Vagina (tissue), 2 donors: ENCODE measurements at regions of chr4 and their contacts with region 1.

Region 1: DNA sequence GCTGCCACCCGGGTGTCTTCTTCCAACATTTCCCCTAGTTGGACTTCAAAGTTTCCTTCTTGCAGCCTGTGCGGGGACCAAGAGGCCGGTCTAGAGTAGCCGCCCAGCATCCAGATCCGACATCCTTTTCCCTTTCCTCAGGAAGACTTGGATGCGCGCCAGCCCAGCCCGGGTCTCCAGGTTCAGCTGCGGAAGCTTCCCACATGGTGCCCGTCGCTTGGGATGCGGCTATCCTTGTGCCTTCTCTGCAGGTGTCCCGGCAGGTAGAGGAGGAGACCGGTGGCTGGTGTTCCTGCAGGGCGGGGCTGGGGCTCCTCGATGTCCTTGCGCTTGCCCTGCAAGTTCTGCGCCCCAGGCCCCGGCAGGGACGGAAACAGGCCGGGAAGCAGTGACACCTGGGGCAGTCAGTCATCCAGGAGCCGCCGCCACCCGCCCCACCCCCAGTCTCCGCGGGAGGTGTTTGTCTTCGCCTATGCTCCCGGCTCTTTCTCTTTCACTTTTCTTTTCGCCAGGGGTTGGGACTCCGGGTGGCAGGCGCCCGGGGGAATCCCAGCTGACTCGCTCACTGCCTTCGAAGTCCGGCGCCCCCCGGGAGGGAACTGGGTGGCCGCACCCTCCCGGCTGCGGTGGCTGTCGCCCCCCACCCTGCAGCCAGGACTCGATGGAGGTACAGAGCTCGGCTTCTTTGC is at the start of gene IL15:
- DNase-seq: no peak
- H3K4me3 ChIP-seq: peak within 1 kb of the TSS; percentile 69 to 85
- H3K27ac ChIP-seq: peak within 1 kb of the TSS; percentile 88
- H3K4me1 ChIP-seq: peaks cover 7% of the 10 kb centered on the region
- H3K27me3 ChIP-seq: no peaks in the 10 kb centered on the region
- CTCF ChIP-seq: no peak
- POLR2A ChIP-seq: no peak
- total RNA-seq, gene IL15: 11.5 TPM

Region 2: DNA sequence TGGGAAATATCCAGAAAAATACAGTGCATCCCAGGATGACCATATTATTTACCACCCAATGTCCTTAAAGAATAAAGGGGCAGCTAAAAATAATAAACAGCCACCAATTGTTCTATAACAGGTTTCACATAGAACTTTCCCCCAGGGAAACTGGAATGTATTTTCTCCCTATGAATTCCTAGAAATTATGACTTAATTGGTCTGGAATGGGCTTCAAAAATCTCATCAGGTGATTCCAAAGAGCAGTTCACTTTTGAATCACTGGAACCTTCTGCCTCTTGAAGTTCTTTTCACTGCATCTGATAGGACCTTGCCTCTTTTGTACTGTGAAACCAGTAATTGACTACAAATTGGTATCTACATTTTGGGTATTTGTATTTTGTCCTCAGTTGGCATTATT is 296.3 kb before region 1 on chr4:
- intact Hi-C with region 1: loop called (anchors 5 kb)
- DNase-seq: no peak
- H3K4me3 ChIP-seq: no peak overlapping the region
- H3K27ac ChIP-seq: no peak overlapping the region
- H3K4me1 ChIP-seq: no peaks in the 10 kb centered on the region
- H3K27me3 ChIP-seq: no peaks in the 10 kb centered on the region
- CTCF ChIP-seq: no peak
- POLR2A ChIP-seq: no peak